ENCODE measurements at regions of chr2 and their contacts with region 1.

Region 1: DNA sequence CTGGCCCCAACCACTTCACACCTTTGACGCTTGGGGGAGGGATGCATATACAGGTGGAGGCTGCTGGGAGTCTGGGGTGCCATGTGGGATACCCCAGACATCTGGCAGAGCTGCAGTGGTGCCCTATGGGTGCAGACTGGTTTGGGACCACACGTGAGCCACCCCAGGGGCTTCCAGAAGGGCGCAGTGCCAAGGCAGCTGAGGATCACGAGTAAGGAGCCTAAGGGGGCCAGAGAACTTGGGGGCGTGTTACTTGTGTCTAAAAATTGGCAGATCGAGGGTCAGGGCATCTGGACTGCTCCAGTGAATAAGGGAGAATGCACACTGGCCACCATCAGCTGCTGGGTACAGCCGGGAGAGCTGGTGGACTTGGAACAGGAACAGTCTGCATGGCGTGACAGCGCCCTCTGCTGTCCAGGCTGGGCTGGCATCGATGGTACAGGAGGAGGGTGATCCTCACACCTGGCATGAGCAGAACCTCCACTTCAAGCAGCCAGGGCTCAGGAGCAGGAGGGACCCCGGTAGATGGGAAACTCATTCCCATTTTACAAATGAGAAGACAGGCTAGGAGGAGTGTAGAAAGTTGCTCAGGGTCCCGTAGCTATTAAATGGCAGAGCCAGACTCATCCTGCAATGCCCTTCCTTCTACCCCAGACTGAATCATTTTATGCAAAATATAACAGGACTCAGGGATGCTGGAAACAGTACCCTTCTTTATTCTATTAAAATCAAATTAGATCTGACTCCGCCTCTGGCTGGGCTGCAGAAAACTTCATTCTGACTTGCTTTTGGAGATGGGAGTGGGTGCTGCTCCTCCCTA is 60.4 kb downstream of the ATOH8 start:
- DNase-seq: peak; percentile 84
- H3K4me3 Mint-ChIP-seq: no peak overlapping the region
- H3K27ac Mint-ChIP-seq: no peak overlapping the region
- H3K4me1 Mint-ChIP-seq: peaks cover 5% of the 10 kb centered on the region
- H3K27me3 Mint-ChIP-seq: no peaks in the 10 kb centered on the region
- CTCF ChIP-seq: peak; percentile 97

Region 2: GRCh38 chr2:85538486-85539360 is 275.5 kb before region 1 on chr2 and contains the start of gene MAT2A:
- CTCF ChIA-PET with region 1: no interaction called
- POLR2A ChIA-PET with region 1: no interaction called
- intact Hi-C with region 1: no loop called
- DNase-seq: peak; percentile 90
- H3K4me3 Mint-ChIP-seq: peak within 1 kb of the TSS; percentile 98
- H3K27ac Mint-ChIP-seq: peak within 1 kb of the TSS; percentile 96
- H3K4me1 Mint-ChIP-seq: peaks cover 52% of the 10 kb centered on the region
- H3K27me3 Mint-ChIP-seq: no peaks in the 10 kb centered on the region
- CTCF ChIP-seq: peak; percentile 25
- total RNA-seq, gene MAT2A: 348 and 366 TPM in 2 replicates

Region 3: GRCh38 chr2:85635636-85636035 is 178.6 kb before region 1 on chr2:
- CTCF ChIA-PET with region 1: interaction called, 49 read pairs
- POLR2A ChIA-PET with region 1: no interaction called
- intact Hi-C with region 1: loop called (anchors 1 kb)
- DNase-seq: no peak
- H3K4me3 Mint-ChIP-seq: no peak overlapping the region
- H3K27ac Mint-ChIP-seq: peak overlapping the region; percentile 28
- H3K4me1 Mint-ChIP-seq: peaks cover 13% of the 10 kb centered on the region
- H3K27me3 Mint-ChIP-seq: no peaks in the 10 kb centered on the region
- CTCF ChIP-seq: no peak

Region 4: DNA sequence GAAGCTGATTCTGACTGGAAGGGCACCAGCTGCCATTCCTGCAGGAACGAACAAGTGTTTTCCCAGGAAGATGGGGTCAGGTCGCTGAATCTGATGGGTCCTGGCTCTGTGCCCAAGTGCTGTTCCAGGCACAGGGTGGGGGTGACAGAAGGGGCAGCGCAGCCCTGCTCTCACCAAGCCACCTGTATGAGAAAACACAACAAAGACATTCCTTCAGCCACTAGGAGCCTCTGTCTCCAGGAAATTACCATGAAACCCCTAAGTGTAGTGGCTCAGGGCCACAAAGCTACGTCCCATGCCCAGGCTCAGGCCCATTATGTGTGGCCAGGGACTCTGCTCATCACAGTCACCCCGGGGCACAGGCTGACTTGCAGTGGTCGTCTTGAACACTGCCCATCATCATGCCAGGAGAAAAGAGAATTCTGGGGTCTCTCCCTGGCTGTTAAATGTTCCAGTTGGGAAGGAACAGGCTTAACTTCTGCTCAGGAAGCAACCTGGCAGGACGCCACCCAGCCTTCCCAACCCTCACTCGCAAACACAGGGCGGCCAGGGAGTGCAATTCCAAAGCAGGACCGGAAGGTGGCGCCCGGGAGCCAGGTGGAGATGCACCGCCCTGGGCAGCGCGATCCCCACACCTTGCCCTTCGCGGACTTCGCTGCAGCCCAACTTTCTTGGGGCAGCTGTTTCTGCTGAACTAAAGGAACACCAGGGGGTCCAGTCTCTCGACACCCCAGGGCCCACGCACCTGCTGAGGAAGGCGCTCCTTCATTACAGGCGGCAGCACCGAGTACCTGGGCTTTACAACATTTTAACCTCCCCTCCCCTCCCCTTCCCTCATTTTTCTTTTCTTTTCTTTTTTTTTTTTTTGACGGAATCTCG is 135.2 kb before region 1 on chr2:
- CTCF ChIA-PET with region 1: interaction called, 19 read pairs
- POLR2A ChIA-PET with region 1: no interaction called
- intact Hi-C with region 1: loop called (anchors 1 kb)
- DNase-seq: peak; percentile 91
- H3K4me3 Mint-ChIP-seq: no peak overlapping the region
- H3K27ac Mint-ChIP-seq: no peak overlapping the region
- H3K4me1 Mint-ChIP-seq: peaks cover 32% of the 10 kb centered on the region
- H3K27me3 Mint-ChIP-seq: no peaks in the 10 kb centered on the region
- CTCF ChIP-seq: peak; percentile 99

Region 5: GRCh38 chr2:85723707-85724360 is 90.4 kb before region 1 on chr2:
- CTCF ChIA-PET with region 1: interaction called, 153 read pairs
- POLR2A ChIA-PET with region 1: interaction called, 10 read pairs
- intact Hi-C with region 1: loop called (anchors 1 kb)
- DNase-seq: no peak
- H3K4me3 Mint-ChIP-seq: no peak overlapping the region
- H3K27ac Mint-ChIP-seq: peak overlapping the region; percentile 1
- H3K4me1 Mint-ChIP-seq: no peaks in the 10 kb centered on the region
- H3K27me3 Mint-ChIP-seq: no peaks in the 10 kb centered on the region
- CTCF ChIP-seq: no peak

Region 6: DNA sequence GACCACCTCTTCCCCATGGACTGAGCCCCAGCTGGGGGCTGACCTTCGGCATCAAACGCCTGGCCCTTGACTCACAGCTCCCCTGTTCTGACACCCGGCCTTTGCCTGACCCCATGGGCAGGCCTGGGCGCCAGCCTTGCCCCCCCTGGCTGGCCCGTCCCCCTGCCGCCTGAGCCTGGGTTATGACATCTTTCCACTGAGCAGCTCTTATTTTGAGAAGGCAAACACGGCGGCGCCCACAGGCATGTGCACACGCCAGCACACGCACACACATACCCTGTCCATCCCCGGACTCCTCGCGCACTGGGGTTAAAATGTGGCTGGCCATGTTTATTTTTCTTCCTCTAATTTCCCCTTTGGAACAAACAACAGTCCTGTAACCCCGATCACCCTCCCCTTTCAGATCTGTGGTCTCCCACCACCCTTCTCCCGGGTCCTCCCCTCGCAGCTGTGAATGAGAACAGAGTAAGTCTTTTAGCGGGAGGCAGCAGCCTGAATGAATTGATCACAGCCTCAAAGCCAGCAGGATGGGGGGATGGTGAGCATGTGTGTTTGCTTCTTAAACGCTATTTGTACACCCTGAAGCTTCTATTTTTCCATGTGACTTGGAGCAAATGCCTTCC is 72.2 kb before region 1 on chr2:
- CTCF ChIA-PET with region 1: interaction called, 24 read pairs
- POLR2A ChIA-PET with region 1: interaction called, 4 read pairs
- intact Hi-C with region 1: no loop called
- DNase-seq: peak; percentile 58
- H3K4me3 Mint-ChIP-seq: peak overlapping the region; percentile 11
- H3K27ac Mint-ChIP-seq: peak overlapping the region; percentile 91
- H3K4me1 Mint-ChIP-seq: peaks cover 29% of the 10 kb centered on the region
- H3K27me3 Mint-ChIP-seq: peaks cover 19% of the 10 kb centered on the region
- CTCF ChIP-seq: no peak

Region 7: GRCh38 chr2:85772019-85772745 is 42.0 kb before region 1 on chr2:
- CTCF ChIA-PET with region 1: interaction called, 10 read pairs
- POLR2A ChIA-PET with region 1: interaction called, 4 read pairs
- intact Hi-C with region 1: no loop called
- DNase-seq: peak; percentile 98
- H3K4me3 Mint-ChIP-seq: peak overlapping the region; percentile 17
- H3K27ac Mint-ChIP-seq: peak overlapping the region; percentile 77
- H3K4me1 Mint-ChIP-seq: peaks cover 34% of the 10 kb centered on the region
- H3K27me3 Mint-ChIP-seq: no peaks in the 10 kb centered on the region
- CTCF ChIP-seq: peak; percentile 5

Region 8: DNA sequence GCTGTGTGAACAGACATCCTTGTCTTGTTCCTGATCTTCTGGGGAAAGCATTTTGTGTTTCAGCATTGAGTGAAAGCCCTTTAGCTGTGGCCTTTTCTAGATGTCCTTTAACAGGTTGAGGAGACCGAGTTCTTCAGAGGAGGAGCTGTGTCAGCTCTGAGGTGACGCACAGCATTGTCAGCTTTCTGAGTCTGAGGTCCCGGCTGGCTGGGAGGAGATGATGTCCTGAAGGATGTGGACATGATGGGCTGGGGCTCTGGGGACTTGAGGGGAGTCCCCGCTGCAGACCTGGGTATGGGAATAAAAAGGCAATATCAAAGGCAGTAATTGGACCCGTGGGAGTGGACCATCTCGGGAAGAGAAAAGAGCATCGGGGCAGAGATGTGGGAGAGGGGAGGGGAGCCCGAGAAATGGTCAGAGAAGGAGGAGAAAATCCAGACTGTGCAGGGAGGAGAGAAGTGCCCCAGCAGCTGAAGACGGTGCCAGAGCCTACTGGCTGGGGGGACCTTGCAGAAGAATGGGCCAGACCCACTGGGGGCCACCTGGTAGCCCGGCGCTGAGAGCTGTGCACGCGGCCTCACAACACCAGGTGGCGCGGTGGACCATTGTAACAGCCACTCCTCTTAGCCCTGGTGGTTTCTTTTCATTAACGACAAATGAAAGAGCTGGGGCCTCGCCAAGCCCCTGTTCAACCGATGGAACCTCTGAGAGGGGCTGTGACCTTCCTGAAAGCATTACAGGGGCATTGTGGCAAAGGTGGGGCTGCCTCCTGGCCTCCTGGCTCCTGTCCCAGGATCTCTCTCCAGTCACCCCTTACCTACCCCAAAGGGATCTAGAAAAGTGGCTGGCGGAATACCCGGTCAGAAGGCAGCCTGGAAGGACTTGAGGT is 13.0 kb after region 1 on chr2:
- CTCF ChIA-PET with region 1: interaction called, 15 read pairs
- POLR2A ChIA-PET with region 1: no interaction called
- intact Hi-C with region 1: no loop called
- DNase-seq: peak; percentile 74
- H3K4me3 Mint-ChIP-seq: no peak overlapping the region
- H3K27ac Mint-ChIP-seq: no peak overlapping the region
- H3K4me1 Mint-ChIP-seq: peaks cover 5% of the 10 kb centered on the region
- H3K27me3 Mint-ChIP-seq: peaks cover 7% of the 10 kb centered on the region
- CTCF ChIP-seq: peak; percentile 90

Region 9: GRCh38 chr2:86011449-86011941 is 197.3 kb after region 1 on chr2:
- CTCF ChIA-PET with region 1: no interaction called
- POLR2A ChIA-PET with region 1: no interaction called
- intact Hi-C with region 1: no loop called
- DNase-seq: peak; percentile 25
- H3K4me3 Mint-ChIP-seq: no peak overlapping the region
- H3K27ac Mint-ChIP-seq: no peak overlapping the region
- H3K4me1 Mint-ChIP-seq: no peaks in the 10 kb centered on the region
- H3K27me3 Mint-ChIP-seq: no peaks in the 10 kb centered on the region
- CTCF ChIP-seq: no peak

Measured in MCF 10A (cell line).